BJ (cell line): ENCODE measurements at regions of chr7 and their contacts with region 1.

Region 1: GRCh38 chr7:2670720-2671391 is 17.1 kb upstream of the AMZ1 start:
- DNase-seq: no peak
- H3K4me3 ChIP-seq: no peak overlapping the region
- H3K27me3 ChIP-seq: no peaks in the 10 kb centered on the region
- CTCF ChIP-seq: peak; percentile 93

Region 2: DNA sequence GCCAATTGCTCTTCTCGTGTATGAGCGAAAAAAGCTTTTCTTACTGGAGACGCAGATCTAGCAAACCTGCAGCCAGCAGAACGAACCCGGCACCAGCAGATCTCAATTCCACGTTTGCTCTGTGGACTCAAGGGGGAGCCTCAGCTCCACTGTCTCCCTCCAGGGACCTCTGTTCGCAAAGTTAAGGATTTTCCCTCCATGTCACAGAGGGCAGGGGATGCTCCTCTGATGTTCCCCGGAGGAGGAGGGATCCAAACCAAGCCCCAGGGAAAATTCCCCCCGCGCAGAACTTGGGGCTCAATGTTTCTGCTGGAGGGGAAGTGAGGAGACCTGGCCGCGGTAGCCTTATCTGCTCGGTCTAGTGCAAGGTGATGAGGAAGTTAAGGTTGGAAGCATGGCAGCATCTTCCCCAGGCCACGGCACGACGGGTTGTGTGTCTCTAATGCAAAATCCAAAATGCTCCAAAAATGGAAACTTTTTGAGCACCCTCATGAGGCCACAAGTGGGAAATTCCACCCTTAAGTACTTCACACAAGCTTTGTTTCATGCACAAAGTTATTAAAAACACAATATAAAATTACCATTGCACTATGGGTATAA is 103.1 kb before region 1 on chr7:
- CTCF ChIA-PET with region 1: interaction called, 23 read pairs
- POLR2A ChIA-PET with region 1: no interaction called
- DNase-seq: no peak
- H3K4me3 ChIP-seq: no peak overlapping the region
- H3K27me3 ChIP-seq: no peaks in the 10 kb centered on the region
- CTCF ChIP-seq: peak; percentile 76

Region 3: DNA sequence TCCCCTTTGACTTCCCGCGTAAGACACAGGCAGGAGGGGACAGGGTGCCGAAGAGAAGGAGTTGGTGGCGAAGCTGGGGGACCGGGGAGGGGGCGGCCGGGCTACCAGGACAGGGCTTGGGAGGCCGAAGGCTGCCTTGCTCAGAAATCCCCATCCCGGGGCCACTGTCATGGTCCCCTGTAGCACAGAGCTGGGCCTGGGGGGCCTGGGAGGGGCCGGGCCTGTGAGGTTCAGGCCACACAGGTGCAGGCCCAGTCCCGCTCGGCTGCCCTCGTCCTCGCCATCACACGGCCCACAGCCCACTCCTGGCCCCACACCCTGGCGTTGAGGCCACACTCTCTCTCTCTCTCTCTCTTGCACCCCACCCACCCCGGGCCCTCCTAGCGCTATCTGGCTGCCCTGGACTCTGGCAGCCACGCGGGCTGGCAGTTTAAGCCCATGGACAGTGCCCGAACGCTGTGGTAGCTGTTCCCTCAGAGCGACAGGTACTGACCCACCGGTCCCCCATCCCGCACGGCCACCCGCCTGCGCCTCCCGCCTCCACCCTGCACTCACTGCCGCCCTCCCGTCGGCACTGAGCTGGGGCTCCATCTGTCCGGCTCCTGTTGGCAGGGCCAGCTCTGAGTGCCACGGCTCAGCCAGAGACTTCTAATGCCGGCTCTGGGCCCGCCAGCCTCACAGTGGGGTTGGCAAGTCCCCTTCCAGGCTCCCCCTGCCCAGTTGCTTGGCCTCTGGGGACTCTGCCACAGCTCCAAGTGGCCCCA is 11.1 kb before region 1 on chr7:
- CTCF ChIA-PET with region 1: interaction called, 10 read pairs
- POLR2A ChIA-PET with region 1: no interaction called
- DNase-seq: no peak
- H3K4me3 ChIP-seq: no peak overlapping the region
- H3K27me3 ChIP-seq: no peaks in the 10 kb centered on the region
- CTCF ChIP-seq: no peak

Region 4: DNA sequence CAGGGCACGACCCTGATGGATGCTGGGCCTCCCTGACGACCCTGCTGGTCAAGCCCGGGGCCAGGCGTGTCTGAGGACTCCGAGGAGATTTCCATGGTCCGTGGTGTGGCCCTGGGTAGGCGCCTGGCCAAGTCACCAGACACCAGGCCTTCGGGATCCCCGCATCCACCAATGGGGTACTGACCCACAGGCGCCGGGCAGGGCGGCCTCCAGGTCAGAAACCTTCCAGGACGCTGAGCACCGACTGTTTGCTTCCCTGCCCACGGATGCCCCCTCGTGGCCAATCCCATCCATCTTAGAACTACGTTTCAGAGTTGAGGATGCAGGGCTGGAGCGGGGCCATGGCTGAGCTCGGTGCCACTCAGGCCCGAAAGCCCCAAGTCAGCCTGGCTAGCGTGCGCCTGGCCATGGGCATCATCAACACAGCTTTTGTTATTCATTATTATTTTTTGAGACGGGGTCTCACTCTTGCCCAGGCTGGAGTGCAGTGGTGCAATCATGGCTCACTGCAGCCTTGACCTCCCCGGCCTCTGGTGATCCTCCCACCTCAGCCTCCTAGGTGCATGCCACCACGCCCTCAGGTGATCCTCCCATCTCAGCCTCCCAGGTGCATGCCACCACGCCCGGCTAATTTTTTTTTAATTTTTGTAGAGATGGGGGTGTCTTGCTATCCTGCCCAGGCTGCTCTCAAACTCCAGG is 10.1 kb after region 1 on chr7:
- CTCF ChIA-PET with region 1: interaction called, 20 read pairs
- POLR2A ChIA-PET with region 1: no interaction called
- DNase-seq: no peak
- H3K4me3 ChIP-seq: no peak overlapping the region
- H3K27me3 ChIP-seq: no peaks in the 10 kb centered on the region
- CTCF ChIP-seq: peak; percentile 81

Region 5: GRCh38 chr7:2709553-2710285 is 38.9 kb after region 1 on chr7:
- CTCF ChIA-PET with region 1: interaction called, 11 read pairs
- POLR2A ChIA-PET with region 1: no interaction called
- DNase-seq: no peak
- H3K4me3 ChIP-seq: no peak overlapping the region
- H3K27me3 ChIP-seq: no peaks in the 10 kb centered on the region
- CTCF ChIP-seq: peak; percentile 80

Region 6: GRCh38 chr7:2757904-2758672 is 87.2 kb after region 1 on chr7:
- CTCF ChIA-PET with region 1: no interaction called
- POLR2A ChIA-PET with region 1: no interaction called
- DNase-seq: peak; percentile 98
- H3K4me3 ChIP-seq: peak overlapping the region; percentile 2; the same call in 1 of the 2 replicates
- H3K27me3 ChIP-seq: no peaks in the 10 kb centered on the region
- CTCF ChIP-seq: no peak

Region 7: DNA sequence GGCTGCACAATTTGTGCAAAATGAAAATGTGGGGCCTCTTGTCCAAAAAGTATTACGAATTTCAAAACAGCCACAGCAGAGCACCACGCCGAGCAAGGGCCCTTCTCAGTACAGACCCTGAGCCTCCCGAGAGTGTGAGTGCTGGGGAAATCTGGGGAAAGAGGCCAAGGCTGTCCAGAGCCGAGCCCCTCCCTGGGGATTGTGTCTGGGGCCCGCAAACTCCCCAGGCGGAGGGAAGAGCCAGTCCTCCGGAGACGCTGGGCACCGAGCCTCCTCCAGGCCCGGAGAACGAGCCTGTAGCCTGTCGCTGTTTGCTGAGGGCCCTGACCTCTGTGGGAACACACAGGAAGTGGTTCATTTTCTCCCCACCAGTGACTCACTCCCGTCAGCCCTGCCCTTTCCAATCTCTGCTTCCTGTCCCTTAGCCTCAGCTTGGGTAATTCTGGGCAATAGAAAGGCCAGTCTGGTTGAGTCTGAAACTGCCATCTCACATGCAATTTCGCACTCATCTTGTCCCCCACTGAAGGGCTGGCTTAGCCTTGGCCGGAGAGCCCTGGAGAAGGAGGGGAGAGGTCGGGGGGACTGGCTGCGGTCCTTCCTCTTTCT is 192.7 kb after region 1 on chr7:
- CTCF ChIA-PET with region 1: interaction called, 10 read pairs
- POLR2A ChIA-PET with region 1: no interaction called
- DNase-seq: peak; percentile 66
- H3K4me3 ChIP-seq: no peak overlapping the region
- H3K27me3 ChIP-seq: no peaks in the 10 kb centered on the region
- CTCF ChIP-seq: no peak

Region 8: DNA sequence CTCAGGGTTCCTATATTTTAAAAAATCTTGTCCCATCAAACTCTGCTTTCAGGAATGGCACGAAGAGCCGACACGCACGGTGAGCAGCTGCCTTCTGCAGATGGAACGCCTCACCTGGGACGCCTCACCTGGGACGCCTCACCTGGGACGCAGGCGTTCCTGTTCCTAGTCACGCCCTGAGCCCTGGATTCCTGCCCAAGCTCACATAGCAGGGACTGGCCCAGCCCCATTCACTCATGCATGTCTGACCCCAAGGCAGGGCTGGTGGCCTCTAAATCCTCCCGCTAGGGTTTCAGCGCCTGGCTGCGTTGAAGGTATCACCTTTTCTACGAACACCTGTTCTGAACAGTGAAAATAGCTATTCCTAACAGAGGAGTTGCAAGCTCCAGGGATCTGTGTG is 323.0 kb after region 1 on chr7:
- CTCF ChIA-PET with region 1: no interaction called
- POLR2A ChIA-PET with region 1: no interaction called
- DNase-seq: no peak
- H3K4me3 ChIP-seq: no peak overlapping the region
- H3K27me3 ChIP-seq: no peaks in the 10 kb centered on the region
- CTCF ChIP-seq: no peak

Region 9: GRCh38 chr7:3154912-3155494 is 484.1 kb after region 1 on chr7:
- CTCF ChIA-PET with region 1: interaction called, 13 read pairs
- POLR2A ChIA-PET with region 1: no interaction called
- DNase-seq: peak; percentile 0
- H3K4me3 ChIP-seq: no peak overlapping the region
- H3K27me3 ChIP-seq: no peaks in the 10 kb centered on the region
- CTCF ChIP-seq: peak; percentile 68